ENCODE measurements at regions of chr2 and their contacts with region 1.

Region 1: DNA sequence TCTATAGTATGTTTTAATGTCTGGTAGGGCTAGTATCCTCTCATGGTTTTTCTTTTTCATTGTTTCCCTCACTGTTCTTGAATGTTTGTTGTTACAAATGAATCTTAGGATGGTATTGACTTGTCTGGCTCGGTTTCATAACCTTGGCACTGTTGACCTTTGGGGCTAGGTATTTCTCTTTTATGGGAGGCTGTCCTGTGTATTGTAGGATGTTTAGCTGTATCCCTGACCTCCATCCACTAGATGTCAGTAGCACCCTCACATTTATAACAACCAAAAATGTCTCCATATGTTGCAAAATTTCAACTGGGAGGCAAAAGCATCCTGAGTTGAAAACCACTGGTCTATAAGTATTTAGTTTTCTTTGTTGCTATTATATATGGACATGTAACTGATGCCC is 7.0 kb upstream of the AOX1 start:
- DNase-seq: no peak
- ATAC-seq: peak; percentile 83
- H3K4me3 Mint-ChIP-seq: no peak overlapping the region
- H3K27ac Mint-ChIP-seq: no peak overlapping the region
- H3K4me1 Mint-ChIP-seq: peaks cover 17% of the 10 kb centered on the region
- H3K27me3 Mint-ChIP-seq: no peaks in the 10 kb centered on the region

Region 2: DNA sequence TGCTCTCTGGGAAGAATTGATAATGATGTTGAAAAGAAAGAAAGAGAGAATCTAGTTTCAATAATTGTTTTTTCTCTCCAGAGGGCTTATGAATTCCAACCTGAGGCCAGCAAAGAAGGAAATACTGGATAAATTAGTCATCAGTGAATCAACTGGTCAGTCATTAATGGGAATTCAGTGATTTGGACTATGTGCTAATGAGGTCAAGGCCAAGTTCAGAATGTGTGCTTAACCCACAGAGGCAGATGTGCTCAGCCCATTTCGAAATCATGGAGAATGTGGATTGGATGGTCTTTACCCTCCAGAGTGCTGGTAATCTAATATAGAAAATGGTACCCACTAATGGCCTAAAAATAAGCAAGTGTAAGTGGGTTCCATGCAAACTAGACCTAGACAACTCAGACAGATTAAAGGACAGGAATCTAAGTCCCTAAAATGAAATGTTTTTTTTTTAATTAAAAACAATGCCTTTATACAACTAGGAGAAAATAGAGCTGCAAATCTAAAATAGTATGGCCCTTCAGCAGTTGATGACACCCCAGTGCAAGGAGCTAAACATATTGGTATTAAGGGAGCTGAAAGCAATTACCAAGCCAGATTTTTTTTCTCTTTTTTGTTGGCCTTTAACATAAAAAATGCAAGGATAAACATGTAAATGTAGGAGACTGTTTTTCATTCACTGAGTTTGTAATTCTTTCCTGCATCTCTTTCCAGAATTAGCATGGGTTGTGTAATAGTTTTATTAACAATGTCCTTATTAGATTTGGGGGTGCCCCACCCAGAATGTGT is 1417.9 kb before region 1 on chr2:
- CTCF ChIA-PET with region 1: no interaction called
- POLR2A ChIA-PET with region 1: no interaction called
- intact Hi-C with region 1: no loop called
- DNase-seq: no peak
- ATAC-seq: no peak
- H3K4me3 Mint-ChIP-seq: no peak overlapping the region
- H3K27ac Mint-ChIP-seq: no peak overlapping the region
- H3K4me1 Mint-ChIP-seq: no peaks in the 10 kb centered on the region
- H3K27me3 Mint-ChIP-seq: no peaks in the 10 kb centered on the region

Region 3: DNA sequence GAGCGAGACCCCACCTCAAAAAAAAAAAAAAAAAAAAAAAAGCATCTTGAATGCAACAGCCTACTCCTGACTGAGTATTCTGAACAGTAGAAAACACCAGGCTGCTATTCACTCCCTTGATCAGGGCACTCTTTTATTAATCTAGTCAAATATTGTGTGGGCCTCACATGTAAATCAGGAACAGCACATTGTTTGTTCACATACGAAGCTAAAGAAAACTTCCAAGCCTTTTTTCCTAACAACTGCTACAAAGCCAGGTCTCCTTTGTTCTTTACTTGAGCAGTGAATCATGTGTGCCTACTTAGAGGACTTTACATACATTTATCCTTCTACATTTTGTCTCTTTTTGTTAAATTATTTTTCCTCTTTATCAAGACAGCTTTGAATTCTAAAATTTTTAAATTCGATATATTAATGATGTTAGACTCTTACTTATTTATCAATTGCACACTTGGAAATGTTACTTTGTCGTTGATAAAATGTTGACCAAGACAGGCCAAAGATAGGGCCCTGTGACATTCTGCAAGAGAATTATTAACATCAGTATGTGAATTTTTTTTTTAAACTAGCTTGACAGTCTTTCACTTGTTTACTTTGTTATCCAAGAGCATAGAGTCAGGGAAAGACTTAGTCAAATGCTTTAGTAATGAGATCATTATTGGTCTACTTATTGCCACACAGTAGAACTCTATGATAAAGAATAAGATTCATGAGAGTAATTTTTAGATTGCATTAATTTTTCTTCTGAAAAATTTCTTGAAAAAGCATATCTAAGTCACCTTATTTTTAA is 259.0 kb before region 1 on chr2:
- CTCF ChIA-PET with region 1: no interaction called
- POLR2A ChIA-PET with region 1: no interaction called
- intact Hi-C with region 1: no loop called
- DNase-seq: no peak
- ATAC-seq: no peak
- H3K4me3 Mint-ChIP-seq: no peak overlapping the region
- H3K27ac Mint-ChIP-seq: no peak overlapping the region
- H3K4me1 Mint-ChIP-seq: peaks cover 16% of the 10 kb centered on the region
- H3K27me3 Mint-ChIP-seq: no peaks in the 10 kb centered on the region

Region 4: GRCh38 chr2:200735061-200735460 is 156.3 kb after region 1 on chr2:
- CTCF ChIA-PET with region 1: interaction called, 7 read pairs
- POLR2A ChIA-PET with region 1: no interaction called
- intact Hi-C with region 1: loop called (anchors 1 kb)
- DNase-seq: peak; percentile 66
- ATAC-seq: peak; percentile 49
- H3K4me3 Mint-ChIP-seq: no peak overlapping the region
- H3K27ac Mint-ChIP-seq: peak overlapping the region; percentile 70
- H3K4me1 Mint-ChIP-seq: peaks cover 13% of the 10 kb centered on the region
- H3K27me3 Mint-ChIP-seq: peaks cover 14% of the 10 kb centered on the region

Region 5: DNA sequence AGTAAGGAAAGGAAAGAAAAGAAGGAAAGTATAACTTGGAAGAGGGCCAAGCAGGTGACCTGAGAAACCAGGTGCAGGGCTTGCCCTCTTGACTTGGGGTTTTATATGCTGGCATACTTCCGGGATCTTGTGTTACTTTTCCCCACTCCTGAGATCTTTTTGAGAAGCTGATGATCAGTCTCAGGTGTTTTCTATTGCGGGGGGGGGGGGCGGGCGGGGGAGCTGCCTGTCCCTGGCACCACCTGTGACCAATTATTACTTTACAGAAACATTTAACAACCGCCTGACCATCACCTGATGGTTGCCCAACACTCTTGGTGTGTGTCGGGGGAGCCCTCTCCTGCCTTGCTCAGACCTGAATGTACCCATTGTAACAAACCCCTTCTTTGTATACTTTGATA is 597.3 kb after region 1 on chr2:
- CTCF ChIA-PET with region 1: interaction called, 3 read pairs
- POLR2A ChIA-PET with region 1: no interaction called
- intact Hi-C with region 1: loop called in 1 of 2 experiments (anchors 5 kb)
- DNase-seq: no peak
- ATAC-seq: no peak
- H3K4me3 Mint-ChIP-seq: no peak overlapping the region
- H3K27ac Mint-ChIP-seq: no peak overlapping the region
- H3K4me1 Mint-ChIP-seq: peaks cover 10% of the 10 kb centered on the region
- H3K27me3 Mint-ChIP-seq: no peaks in the 10 kb centered on the region

Measured in activated CD4-positive, alpha-beta T cell treated with anti-CD3 and anti-CD28 coated beads for 36 hours (primary cell).